ENCODE measurements at regions of chr15 and their contacts with region 1.

Region 1: DNA sequence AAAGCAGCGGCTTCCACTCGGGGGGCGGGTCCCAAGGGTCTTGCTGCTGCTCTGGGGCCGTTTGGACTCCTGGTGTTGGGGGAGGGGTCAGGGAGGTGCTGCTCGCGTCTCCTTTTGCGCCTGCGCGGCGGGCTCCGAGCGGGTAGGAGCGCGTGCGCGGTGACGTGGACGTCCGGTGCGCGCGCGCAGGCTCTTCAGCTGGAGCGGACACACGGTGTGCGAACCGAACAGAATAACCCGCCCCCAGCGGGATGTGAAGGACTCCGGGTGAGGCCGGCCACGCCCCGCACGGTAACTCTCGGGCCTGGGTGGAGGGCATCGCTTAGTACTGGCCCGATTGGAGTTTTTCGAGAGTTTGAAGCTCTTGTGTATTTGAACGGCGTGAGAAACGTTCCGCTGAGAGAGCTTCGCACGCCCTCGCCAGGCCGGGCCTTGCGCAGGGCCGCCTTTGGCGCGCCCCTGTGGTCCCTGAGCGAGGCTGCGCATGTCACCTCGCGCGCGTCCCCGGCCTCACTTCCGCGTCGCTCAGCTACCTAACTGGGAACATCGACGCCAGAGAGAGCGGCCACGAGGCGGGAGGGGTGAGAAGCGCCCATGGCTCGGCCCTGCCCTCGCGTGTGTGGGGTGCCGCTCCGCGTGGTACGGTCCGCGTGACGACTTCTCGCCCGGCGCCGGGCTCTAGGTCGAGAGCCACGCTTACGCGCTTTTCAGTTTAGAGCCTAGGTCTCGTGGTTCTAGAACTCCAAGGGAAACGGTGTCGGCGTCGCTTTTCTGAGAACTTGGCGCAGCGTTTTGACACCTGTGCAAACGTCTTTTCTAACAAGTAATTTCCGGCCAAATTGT is at the start of gene MGA:
- DNase-seq: peak; percentile 91
- H3K4me3 Mint-ChIP-seq: peak within 1 kb of the TSS; percentile 82
- H3K27ac Mint-ChIP-seq: peak within 1 kb of the TSS; percentile 93
- H3K4me1 Mint-ChIP-seq: peaks cover 41% of the 10 kb centered on the region
- H3K27me3 Mint-ChIP-seq: peaks cover 56% of the 10 kb centered on the region

Region 2: DNA sequence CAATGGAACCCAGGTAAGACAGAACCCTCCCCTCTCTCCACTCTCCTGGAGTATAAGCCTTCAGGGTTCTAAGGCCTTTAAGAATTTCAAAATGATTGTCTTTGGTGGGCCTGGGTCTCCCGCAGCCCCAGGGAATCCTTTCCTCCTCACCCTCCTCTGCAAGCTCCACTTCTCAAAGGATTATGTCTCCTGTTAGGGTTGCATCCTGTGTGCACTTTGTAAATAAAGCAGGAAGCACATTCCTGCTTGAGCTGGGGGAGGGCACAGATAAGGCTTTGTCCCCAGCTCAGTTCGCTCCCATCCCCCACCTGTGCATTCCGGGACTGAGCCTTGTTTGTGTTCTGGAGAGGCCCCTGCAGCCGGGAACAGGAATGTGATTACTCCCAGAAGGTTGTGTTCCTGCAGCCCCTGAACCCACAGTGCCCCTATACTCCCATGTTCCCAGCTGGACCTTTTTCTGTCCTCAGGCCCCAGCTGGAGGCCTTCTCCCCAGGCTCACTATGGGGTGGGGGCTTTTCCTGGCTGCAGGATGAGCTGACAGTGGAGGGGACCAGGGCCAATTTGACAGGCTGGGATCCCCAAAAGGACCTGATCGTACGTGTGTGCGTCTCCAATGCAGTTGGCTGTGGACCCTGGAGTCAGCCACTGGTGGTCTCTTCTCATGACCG is 92.0 kb before region 1 on chr15:
- CTCF ChIA-PET with region 1: no interaction called
- DNase-seq: no peak
- H3K4me3 Mint-ChIP-seq: no peak overlapping the region
- H3K27ac Mint-ChIP-seq: no peak overlapping the region
- H3K4me1 Mint-ChIP-seq: no peaks in the 10 kb centered on the region
- H3K27me3 Mint-ChIP-seq: peaks cover 43% of the 10 kb centered on the region

Region 3: DNA sequence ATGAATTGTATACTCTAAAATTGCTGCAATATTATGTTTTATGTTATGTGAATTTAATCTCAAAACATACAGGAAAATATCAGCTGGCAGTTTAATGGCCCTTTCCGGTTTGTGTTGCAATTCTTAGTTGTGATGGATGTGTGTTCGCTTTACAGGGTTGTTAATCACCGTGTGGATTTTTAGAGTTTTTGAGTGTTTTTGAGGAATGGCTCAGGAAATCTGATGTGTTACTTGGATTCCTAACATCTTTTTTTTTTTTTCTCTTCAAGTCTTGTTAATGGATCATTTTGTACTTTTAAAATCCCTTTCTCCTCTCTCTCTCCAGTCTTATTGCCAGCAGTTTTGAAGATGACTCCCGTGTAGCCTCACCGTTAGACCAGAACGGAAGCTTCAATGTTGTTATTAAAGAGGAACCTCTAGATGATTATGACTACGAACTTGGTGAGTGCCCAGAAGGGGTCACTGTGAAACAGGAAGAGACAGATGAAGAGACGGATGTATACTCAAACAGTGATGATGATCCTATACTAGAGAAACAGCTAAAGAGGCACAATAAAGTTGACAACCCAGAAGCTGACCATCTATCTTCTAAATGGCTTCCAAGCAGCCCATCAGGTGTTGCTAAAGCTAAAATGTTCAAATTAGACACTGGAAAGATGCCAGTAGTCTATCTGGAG is 35.4 kb after region 1 on chr15:
- CTCF ChIA-PET with region 1: interaction called, 10 read pairs
- DNase-seq: peak; percentile 70
- H3K4me3 Mint-ChIP-seq: no peak overlapping the region
- H3K27ac Mint-ChIP-seq: peak overlapping the region; percentile 68
- H3K4me1 Mint-ChIP-seq: peaks cover 28% of the 10 kb centered on the region
- H3K27me3 Mint-ChIP-seq: no peaks in the 10 kb centered on the region